ENCODE measurements at regions of chr19 and their contacts with region 1.

Region 1: GRCh38 chr19:1540365-1540925 is 16.6 kb downstream of the PLK5 start:
- DNase-seq: peak in 1 of 4 donors; percentile 28
- ATAC-seq: no peak
- H3K4me3 ChIP-seq: no peak overlapping the region
- H3K27ac ChIP-seq: no peak overlapping the region
- H3K4me1 ChIP-seq: no peaks in the 10 kb centered on the region
- H3K27me3 ChIP-seq: peaks cover 0 to 80% of the 10 kb centered on the region in 2 donors
- CTCF ChIP-seq: no peak

Region 2: DNA sequence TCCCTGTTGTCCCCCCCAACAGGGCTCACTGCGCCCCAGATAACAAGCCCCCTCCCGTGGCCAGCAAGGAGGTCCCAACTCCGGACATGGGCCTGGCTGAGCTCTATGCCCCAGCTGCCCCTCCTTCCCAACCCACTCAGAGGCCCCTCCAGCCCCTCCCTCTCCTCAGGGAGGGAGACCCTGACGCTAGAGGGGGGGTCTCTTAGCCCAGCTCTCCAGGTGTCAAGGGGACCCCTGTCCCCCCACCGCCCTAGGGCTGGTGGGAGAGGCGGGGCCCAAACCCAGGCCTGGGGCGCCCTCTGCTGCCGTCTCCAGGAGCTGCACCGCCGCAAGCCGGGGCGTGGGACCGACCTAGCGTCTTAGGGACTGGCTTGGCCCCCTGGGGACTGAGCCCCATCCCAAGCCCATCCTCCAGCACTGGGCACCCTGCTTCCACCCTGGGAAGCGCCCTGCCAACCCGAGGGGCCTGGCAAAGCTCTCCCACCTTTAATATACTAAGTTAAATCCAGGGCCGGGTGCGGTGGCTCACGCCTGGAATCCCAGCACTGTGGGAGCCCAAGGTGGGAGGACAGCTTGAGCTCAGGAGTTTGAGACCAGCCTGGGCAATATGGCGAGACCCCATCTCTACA is 538.8 kb before region 1 on chr19:
- intact Hi-C with region 1: no loop called
- DNase-seq: peak in 2 of 4 donors; percentile 60 to 95
- ATAC-seq: peak; percentile 85
- H3K4me3 ChIP-seq: no peak overlapping the region
- H3K27ac ChIP-seq: no peak overlapping the region
- H3K4me1 ChIP-seq: peaks cover 0 to 21% of the 10 kb centered on the region in 2 donors
- H3K27me3 ChIP-seq: peaks cover 46 to 76% of the 10 kb centered on the region in 2 donors
- CTCF ChIP-seq: peak; percentile 93 to 97

Region 3: DNA sequence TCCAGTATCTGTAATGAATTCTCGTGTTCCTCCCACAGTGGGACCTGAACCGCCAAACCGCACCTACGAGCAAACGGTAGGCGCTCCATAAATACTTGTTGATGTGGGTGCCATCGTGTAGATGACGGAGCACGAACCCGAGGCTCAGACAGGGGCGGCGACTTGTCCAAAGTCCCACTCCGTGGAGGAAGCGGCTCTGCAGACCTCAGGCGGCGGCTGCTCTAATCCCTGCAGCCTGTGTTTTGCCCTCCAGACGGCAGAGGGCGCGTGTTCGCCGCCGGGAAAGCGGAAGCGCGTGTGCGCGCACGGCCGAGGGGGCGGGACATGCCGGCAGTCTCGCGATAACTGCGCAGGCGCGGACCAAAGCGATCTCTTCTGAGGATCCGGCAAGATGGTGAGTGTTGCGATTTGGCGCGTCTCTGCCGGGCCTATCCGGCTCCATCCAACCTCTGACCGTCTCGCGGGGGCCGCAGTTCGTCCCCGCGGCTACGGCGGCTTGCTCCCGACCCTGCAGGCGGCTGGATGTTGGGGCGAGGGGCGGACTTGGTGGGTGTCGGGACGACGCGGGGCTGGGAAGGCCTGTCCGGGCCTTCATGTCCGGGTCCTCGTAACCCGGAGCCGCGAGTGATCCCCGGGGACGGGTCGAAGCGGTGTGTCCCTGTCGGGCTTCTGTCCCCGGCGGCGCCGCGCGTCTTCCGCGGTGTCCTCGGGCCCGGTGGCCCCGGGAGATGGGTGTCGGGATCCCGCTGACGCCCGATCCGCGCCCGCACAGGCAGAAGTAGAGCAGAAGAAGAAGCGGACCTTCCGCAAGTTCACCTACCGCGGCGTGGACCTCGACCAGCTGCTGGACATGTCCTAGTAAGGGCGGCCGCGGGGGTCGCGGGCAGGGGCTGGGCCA is 102.2 kb before region 1 on chr19 and contains the start of gene RPS15:
- intact Hi-C with region 1: no loop called
- DNase-seq: peak; percentile 95 to 98 (median 98)
- ATAC-seq: peak; percentile 97
- H3K4me3 ChIP-seq: peak within 1 kb of the TSS; percentile 84 to 96
- H3K27ac ChIP-seq: peak within 1 kb of the TSS; percentile 79 to 89
- H3K4me1 ChIP-seq: peaks cover 13 to 28% of the 10 kb centered on the region in 2 donors
- H3K27me3 ChIP-seq: no peaks in the 10 kb centered on the region
- CTCF ChIP-seq: peak; percentile 90 to 97
- polyA plus RNA-seq, gene RPS15: 673 to 987 (median 817) TPM

Region 4: GRCh38 chr19:1560286-1560882 is 19.9 kb after region 1 on chr19:
- intact Hi-C with region 1: no loop called
- DNase-seq: no peak
- ATAC-seq: no peak
- H3K4me3 ChIP-seq: no peak overlapping the region
- H3K27ac ChIP-seq: no peak overlapping the region
- H3K4me1 ChIP-seq: no peaks in the 10 kb centered on the region
- H3K27me3 ChIP-seq: no peaks in the 10 kb centered on the region
- CTCF ChIP-seq: no peak

Region 5: DNA sequence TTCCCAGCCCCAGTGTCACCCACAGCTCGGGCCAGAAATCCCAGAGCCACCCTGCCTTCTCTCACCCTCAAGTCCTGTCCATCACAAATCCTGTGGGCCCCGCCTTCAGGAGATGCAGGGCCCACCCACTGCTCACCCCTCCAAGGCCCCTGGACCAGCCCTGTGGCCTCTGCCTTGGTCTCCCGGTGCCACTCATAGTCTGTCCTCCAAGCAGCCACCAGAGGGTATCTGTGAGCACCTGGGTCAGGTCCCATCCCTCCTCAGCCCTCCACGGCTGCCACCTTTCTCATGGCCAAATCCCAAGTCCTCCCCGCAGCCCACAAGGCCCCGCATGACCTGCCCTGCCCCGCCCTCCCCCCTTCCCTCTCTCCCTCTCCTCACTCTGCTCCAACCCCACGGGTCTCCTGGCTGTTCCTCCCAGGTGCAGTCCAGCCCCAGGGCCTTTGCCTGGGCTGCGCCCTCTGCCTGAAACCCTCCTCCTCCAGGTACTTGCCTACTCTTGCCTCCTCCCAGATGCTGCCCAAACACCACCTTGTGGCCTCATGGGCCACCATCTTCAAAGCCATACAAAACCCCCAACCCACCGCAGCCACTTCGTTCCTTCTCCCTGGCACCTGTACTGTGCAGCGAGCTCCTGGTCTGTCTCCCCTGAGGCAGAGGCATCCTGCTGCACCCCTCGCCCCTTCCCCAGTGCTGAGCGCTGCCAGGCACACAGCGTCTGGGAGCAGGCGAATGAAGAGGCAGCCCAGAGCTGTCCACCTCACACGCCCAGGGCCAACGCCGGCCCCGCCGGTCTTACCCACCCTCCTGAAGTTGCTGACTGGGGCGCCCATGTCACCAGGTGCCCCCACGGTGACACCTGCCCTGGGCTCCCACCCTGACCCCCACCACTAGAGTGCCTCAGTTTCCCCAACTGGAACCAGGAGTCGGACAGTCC is 78.0 kb after region 1 on chr19:
- intact Hi-C with region 1: no loop called
- DNase-seq: peak in 2 of 4 donors; percentile 13 to 73
- ATAC-seq: peak; percentile 45
- H3K4me3 ChIP-seq: no peak overlapping the region
- H3K27ac ChIP-seq: no peak overlapping the region
- H3K4me1 ChIP-seq: no peaks in the 10 kb centered on the region
- H3K27me3 ChIP-seq: no peaks in the 10 kb centered on the region
- CTCF ChIP-seq: peak in 1 of 2 donors; percentile 18

Region 6: GRCh38 chr19:1672038-1672768 is 131.8 kb after region 1 on chr19:
- intact Hi-C with region 1: loop called in 1 of 2 experiments (anchors 10 kb)
- DNase-seq: peak in 1 of 4 donors; percentile 90
- ATAC-seq: peak; percentile 77
- H3K4me3 ChIP-seq: no peak overlapping the region
- H3K27ac ChIP-seq: no peak overlapping the region
- H3K4me1 ChIP-seq: peaks cover 10 to 21% of the 10 kb centered on the region in 2 donors
- H3K27me3 ChIP-seq: peaks cover 69 to 94% of the 10 kb centered on the region in 2 donors
- CTCF ChIP-seq: peak; percentile 79 to 86